ENCODE measurements at regions of chr9 and their contacts with region 1.

Region 1: GRCh38 chr9:133149126-133150107 is 14.3 kb downstream of the GBGT1 start:
- DNase-seq: peak; percentile 83
- ATAC-seq: peak; percentile 71
- H3K4me3 Mint-ChIP-seq: peak overlapping the region; percentile 78
- H3K27ac Mint-ChIP-seq: peak overlapping the region; percentile 71
- H3K4me1 Mint-ChIP-seq: peaks cover 39% of the 10 kb centered on the region
- H3K27me3 Mint-ChIP-seq: no peaks in the 10 kb centered on the region
- CTCF ChIP-seq: no peak

Region 2: DNA sequence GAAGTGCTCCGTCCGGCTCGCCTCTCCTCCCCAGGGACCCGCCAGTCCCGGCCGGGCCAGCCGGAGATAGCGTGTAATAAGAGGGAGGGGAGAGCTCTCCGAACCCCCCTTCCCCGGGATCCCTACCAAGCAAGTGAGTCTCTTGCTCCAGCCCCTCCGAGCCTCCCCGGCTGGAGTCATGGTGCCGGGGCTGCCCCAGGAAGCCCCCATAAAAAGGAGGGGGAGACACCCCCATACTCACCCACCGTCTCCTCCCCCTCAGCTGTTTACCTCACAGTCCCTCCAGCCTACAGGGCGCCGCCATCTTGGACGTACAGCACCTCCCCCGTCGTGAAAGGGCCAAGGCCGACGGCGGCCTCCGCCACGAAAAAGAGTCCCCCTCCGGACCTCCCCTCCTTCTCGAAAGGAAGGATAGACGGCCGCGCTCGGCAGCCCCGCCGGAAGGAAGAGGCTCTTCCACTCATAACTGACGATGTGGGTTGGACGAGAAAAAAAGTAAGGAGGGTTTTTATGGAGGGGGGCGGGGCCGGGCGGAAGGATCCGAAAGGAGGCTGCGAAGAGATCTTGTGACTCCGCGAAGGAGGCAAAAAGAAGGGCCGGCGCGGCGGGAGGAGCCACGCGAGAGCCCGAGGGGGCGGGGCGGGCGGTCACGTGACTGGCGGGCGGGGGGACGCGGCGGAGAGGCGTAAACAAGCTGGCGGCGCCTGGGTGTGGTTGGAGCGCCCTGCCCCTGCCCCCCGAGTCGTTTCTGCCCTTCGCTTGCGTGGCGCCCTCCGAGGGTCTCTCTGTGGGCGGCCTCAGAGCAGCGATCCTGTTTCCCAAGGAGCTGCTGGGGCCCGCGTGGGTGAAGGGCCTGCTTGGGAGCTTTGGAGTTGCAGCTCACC is 204.9 kb before region 1 on chr9 and contains the start of gene TSC1:
- CTCF ChIA-PET with region 1: no interaction called
- POLR2A ChIA-PET with region 1: no interaction called
- intact Hi-C with region 1: loop called (anchors 1 kb)
- DNase-seq: peak; percentile 96
- ATAC-seq: peak; percentile 90
- H3K4me3 Mint-ChIP-seq: peak within 1 kb of the TSS; percentile 98
- H3K27ac Mint-ChIP-seq: peak within 1 kb of the TSS; percentile 100
- H3K4me1 Mint-ChIP-seq: peaks cover 29% of the 10 kb centered on the region
- H3K27me3 Mint-ChIP-seq: no peaks in the 10 kb centered on the region
- CTCF ChIP-seq: no peak
- total RNA-seq, gene TSC1: 51.7 and 61.4 TPM in 2 replicates

Region 3: DNA sequence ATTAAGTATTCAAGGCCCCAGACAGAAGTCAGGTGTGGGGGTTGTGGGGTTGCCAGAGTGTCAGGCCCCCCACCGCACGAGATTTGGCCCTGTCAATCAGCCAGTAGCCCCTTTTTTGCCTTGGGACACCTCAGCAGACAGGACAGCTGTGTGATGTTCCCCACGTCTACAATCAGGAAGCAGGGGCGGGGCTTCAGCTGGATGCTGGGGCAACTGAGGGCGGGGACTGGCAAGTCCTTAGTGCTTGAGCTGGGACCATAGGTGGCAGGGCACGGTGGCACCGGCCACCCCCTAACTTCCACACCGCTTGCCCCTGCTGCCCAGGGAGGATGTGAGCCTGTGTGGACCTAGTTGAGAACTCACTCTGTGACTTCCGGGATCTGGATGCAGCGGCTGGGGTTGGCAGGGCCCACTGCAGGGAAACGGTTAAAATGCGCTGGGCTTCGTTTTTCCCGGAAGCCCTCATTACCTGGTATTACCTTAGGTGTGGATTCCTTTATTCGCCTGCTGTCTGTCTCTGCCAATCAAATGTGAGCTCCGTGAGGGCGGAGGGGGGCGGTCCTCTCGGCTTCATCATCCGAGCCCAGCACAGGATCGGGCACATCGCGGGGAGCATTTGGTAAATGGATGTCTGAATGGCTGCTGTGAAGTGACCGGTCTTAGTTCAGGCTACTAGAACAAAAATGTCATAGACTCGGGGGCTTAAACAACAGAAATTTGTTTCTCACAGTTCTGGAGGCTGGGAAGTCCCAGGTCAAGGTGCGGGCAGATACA is 126.1 kb before region 1 on chr9:
- CTCF ChIA-PET with region 1: interaction called, 12 read pairs
- POLR2A ChIA-PET with region 1: no interaction called
- intact Hi-C with region 1: loop called (anchors 2 kb)
- DNase-seq: no peak
- ATAC-seq: no peak
- H3K4me3 Mint-ChIP-seq: no peak overlapping the region
- H3K27ac Mint-ChIP-seq: no peak overlapping the region
- H3K4me1 Mint-ChIP-seq: peaks cover 7% of the 10 kb centered on the region
- H3K27me3 Mint-ChIP-seq: no peaks in the 10 kb centered on the region
- CTCF ChIP-seq: no peak

Region 4: GRCh38 chr9:133103183-133103986 is 46.0 kb before region 1 on chr9:
- CTCF ChIA-PET with region 1: interaction called, 369 read pairs
- POLR2A ChIA-PET with region 1: interaction called, 12 read pairs
- intact Hi-C with region 1: loop called (anchors 1 kb)
- DNase-seq: peak; percentile 69
- ATAC-seq: peak; percentile 90
- H3K4me3 Mint-ChIP-seq: no peak overlapping the region
- H3K27ac Mint-ChIP-seq: no peak overlapping the region
- H3K4me1 Mint-ChIP-seq: no peaks in the 10 kb centered on the region
- H3K27me3 Mint-ChIP-seq: no peaks in the 10 kb centered on the region
- CTCF ChIP-seq: peak; percentile 71

Region 5: DNA sequence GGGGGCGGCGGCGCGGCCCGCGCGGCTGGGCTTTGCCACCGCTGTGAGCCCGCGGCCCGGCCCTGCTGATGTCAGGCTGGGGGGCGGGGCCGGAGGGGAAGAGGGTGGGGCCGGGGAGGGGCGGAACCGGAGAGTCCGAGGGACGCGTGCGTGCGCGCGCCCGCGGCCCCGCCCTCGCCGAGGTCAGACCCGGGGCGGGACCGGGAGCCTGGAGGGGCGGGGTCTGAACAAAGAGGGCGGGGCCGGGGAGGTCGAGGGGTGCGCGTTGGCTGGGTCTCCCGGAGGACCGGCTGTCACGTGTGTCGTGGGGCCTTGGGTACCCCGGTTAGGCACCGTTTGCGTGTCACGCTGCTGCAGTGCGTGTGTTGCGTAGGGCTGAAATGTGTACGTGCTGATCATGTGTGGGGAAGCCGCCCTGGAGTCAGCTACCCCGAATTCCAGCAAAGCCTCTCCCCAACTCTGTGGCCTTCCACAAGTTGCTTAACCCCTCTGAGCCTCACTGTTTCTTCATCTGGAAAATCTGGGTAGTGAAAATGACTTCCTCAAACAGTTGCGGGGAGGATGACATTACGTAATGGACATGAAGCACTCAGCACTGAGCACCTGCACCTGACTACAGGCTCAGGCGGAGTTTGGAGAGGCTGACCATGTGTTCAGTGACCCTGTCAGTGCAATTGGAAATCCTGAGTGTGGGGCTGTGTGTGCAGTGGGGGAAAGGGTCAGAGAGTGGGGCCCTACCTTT is 28.0 kb before region 1 on chr9 and contains the start of gene RALGDS:
- CTCF ChIA-PET with region 1: interaction called, 369 read pairs
- POLR2A ChIA-PET with region 1: interaction called, 89 read pairs
- intact Hi-C with region 1: loop called (anchors 1 kb)
- DNase-seq: peak; percentile 86
- ATAC-seq: peak; percentile 81
- H3K4me3 Mint-ChIP-seq: peak within 1 kb of the TSS; percentile 82
- H3K27ac Mint-ChIP-seq: peak within 1 kb of the TSS; percentile 94
- H3K4me1 Mint-ChIP-seq: peaks cover 68% of the 10 kb centered on the region
- H3K27me3 Mint-ChIP-seq: no peaks in the 10 kb centered on the region
- CTCF ChIP-seq: no peak
- total RNA-seq, gene RALGDS: 21.2 and 29.2 TPM in 2 replicates

Region 6: GRCh38 chr9:133184962-133185361 is 35.5 kb after region 1 on chr9:
- CTCF ChIA-PET with region 1: interaction called, 5 read pairs
- POLR2A ChIA-PET with region 1: no interaction called
- intact Hi-C with region 1: loop called (anchors 2 kb)
- DNase-seq: no peak
- ATAC-seq: no peak
- H3K4me3 Mint-ChIP-seq: no peak overlapping the region
- H3K27ac Mint-ChIP-seq: no peak overlapping the region
- H3K4me1 Mint-ChIP-seq: peaks cover 9% of the 10 kb centered on the region
- H3K27me3 Mint-ChIP-seq: peaks cover 30% of the 10 kb centered on the region
- CTCF ChIP-seq: no peak

Region 7: GRCh38 chr9:133742849-133743444 is 593.5 kb after region 1 on chr9:
- CTCF ChIA-PET with region 1: no interaction called
- POLR2A ChIA-PET with region 1: no interaction called
- intact Hi-C with region 1: no loop called
- DNase-seq: peak; percentile 77
- ATAC-seq: peak; percentile 84
- H3K4me3 Mint-ChIP-seq: no peak overlapping the region
- H3K27ac Mint-ChIP-seq: no peak overlapping the region
- H3K4me1 Mint-ChIP-seq: peaks cover 9% of the 10 kb centered on the region
- H3K27me3 Mint-ChIP-seq: peaks cover 19% of the 10 kb centered on the region
- CTCF ChIP-seq: peak; percentile 98

Measured in activated B cell treated with CpG ODN at 0.5 μM for 24 hours (primary cell).